Esophagus muscularis mucosa (tissue), 4 donors: ENCODE measurements at regions of chr10 and their contacts with region 1.

Region 1: GRCh38 chr10:13659897-13660550 is 73.3 kb downstream of the PRPF18 start:
- DNase-seq: no peak
- H3K4me3 ChIP-seq: peak overlapping the region; percentile 9 to 25 (median 18)
- H3K27ac ChIP-seq: peak overlapping the region; percentile 69 to 83 (median 76)
- H3K4me1 ChIP-seq: peaks cover 16 to 36% (median 34%) of the 10 kb centered on the region in 4 donors
- H3K27me3 ChIP-seq: no peaks in the 10 kb centered on the region
- CTCF ChIP-seq: peak; percentile 87 to 90 (median 90)
- EP300 ChIP-seq: no peak
- POLR2A ChIP-seq: no peak

Region 2: GRCh38 chr10:13586676-13587355 is 73.2 kb before region 1 on chr10 and contains the start of gene PRPF18:
- intact Hi-C with region 1: no loop called
- DNase-seq: peak; percentile 97
- H3K4me3 ChIP-seq: peak within 1 kb of the TSS; percentile 76 to 86 (median 78)
- H3K27ac ChIP-seq: peak within 1 kb of the TSS; percentile 60 to 77 (median 68)
- H3K4me1 ChIP-seq: peaks cover 16 to 25% (median 20%) of the 10 kb centered on the region in 4 donors
- H3K27me3 ChIP-seq: peaks cover 0 to 23% (median 0%) of the 10 kb centered on the region in 4 donors
- CTCF ChIP-seq: peak in 2 of 3 experiments; percentile 97 to 99
- EP300 ChIP-seq: no peak
- POLR2A ChIP-seq: no peak
- total RNA-seq, gene PRPF18: 16.2 to 27.8 (median 25.6) TPM

Region 3: DNA sequence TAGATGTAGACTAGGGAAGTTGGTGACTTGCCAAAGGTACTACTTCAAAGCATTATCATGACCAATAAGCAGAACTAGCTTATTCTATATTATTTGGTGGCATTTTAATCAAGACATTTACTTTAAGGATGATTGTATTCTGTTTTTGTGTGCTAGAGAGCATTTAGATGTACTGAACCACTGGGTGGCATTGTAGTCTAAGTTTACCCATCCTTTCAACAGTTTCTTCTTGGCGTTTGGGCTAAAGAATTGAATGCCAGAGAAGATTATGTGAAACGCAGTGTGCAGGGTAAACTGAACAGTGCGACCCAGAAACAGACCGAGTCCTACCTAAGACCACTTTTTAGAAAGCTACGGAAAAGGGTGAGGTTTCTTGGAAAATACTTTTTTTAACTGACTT is 46.5 kb before region 1 on chr10:
- intact Hi-C with region 1: loop called (anchors 2 kb)
- DNase-seq: no peak
- H3K4me3 ChIP-seq: no peak overlapping the region
- H3K27ac ChIP-seq: peak overlapping the region in 1 of 4 donors; percentile 65
- H3K4me1 ChIP-seq: peaks cover 0 to 27% (median 26%) of the 10 kb centered on the region in 4 donors
- H3K27me3 ChIP-seq: no peaks in the 10 kb centered on the region
- CTCF ChIP-seq: peak; percentile 51 to 63 (median 54)
- EP300 ChIP-seq: no peak
- POLR2A ChIP-seq: no peak

Region 4: DNA sequence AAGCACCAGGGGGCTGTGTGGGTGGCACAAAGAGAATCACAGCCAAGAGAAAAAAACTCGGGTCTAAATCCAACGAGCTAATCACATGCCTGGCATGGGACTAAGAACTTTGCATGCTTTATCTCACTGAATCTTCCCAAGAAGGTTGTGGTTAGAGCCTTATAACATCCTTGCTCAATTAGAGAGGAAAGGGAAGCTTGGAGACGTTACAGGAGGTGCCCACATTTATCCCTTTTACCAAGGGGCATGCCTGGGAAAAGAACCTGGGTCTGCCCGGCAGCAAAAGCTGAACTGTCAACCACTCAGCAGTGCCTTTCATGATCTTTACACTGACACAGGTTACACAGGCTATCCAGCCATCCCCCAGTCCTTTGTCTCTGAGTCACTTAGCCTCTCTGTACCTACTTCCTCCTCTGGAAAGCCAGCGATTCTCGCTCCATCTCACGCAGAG is 116.9 kb after region 1 on chr10:
- intact Hi-C with region 1: loop called (anchors 1 kb)
- DNase-seq: no peak
- H3K4me3 ChIP-seq: no peak overlapping the region
- H3K27ac ChIP-seq: no peak overlapping the region
- H3K4me1 ChIP-seq: peaks cover 0 to 19% (median 9%) of the 10 kb centered on the region in 4 donors
- H3K27me3 ChIP-seq: no peaks in the 10 kb centered on the region
- CTCF ChIP-seq: no peak
- EP300 ChIP-seq: no peak
- POLR2A ChIP-seq: no peak

Region 5: DNA sequence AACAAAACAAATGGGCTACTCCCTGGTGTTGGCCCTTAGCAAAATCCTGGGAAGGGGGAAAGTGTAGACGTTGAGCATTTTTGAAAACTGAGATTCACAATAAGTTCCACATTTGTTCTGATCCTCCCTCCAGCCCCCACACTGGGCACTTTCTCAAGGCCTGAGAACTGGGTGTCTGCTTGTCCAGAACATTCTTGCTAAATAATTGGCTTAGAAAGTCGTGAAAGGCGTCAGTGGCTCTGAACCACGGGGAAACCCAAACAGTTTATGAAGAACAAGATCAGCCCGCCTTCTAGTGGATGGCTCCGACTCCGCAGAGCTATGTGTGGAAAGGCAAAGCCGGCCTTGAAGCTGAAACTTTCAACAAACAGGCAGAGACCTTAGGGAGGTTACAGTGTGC is 296.8 kb after region 1 on chr10:
- intact Hi-C with region 1: loop called (anchors 10 kb)
- DNase-seq: peak; percentile 94
- H3K4me3 ChIP-seq: peak overlapping the region in 1 of 4 donors; percentile 1
- H3K27ac ChIP-seq: peak overlapping the region; percentile 66 to 79 (median 76)
- H3K4me1 ChIP-seq: peaks cover 17 to 62% (median 55%) of the 10 kb centered on the region in 4 donors
- H3K27me3 ChIP-seq: no peaks in the 10 kb centered on the region
- CTCF ChIP-seq: peak; percentile 66 to 73 (median 70)
- EP300 ChIP-seq: no peak
- POLR2A ChIP-seq: no peak

Region 6: GRCh38 chr10:14153570-14154055 is 493.6 kb after region 1 on chr10:
- intact Hi-C with region 1: no loop called
- DNase-seq: no peak
- H3K4me3 ChIP-seq: peak overlapping the region in 3 of 4 donors; percentile 9 to 39 (median 27)
- H3K27ac ChIP-seq: no peak overlapping the region
- H3K4me1 ChIP-seq: no peaks in the 10 kb centered on the region
- H3K27me3 ChIP-seq: peaks cover 0 to 5% (median 0%) of the 10 kb centered on the region in 4 donors
- CTCF ChIP-seq: no peak
- EP300 ChIP-seq: no peak
- POLR2A ChIP-seq: no peak